SK-N-SH (cell line): ENCODE measurements at regions of chr6 and their contacts with region 1.

Region 1: DNA sequence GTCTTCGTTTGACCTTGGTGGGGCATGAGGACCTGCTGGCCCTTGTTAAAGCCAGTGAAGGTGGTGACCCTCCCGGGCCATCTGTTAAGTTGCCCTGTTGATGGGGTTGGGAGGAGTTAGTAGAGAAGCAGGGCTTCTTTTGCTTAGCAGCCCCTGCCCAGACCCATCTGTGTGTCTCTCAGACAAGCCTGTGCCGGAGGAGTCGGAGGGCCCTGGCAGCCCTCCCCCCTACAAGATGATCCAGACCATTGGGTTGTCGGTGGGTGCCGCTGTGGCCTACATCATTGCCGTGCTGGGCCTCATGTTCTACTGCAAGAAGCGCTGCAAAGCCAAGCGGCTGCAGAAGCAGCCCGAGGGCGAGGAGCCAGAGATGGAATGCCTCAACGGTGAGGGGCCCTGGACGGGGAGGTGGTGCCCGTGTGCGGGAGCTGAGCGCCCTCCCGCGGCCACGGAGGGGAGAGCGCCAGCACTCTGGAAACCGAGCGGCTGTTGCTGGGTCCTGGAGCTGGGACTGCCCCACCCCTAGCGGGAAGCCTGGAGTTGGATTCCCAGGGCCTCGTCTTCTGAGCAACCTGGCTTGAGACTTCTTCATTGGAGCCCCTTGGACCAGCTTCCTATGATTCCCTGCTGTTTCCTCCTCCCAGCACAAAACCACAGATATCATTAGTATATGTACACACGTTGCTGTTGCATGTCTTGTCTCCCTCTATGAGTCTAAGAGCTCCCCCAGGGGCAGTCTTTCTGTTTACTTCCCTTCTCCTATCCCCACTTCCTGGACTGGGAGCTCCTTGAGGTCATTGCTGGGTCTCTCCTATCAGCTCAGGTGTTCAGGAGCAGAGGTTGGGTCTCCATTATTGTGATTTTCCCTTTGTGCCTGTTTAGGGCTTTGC is 27.6 kb upstream of the SRF start:
- DNase-seq: peak; percentile 97
- H3K4me3 ChIP-seq: peak overlapping the region in 1 of 2 experiments; percentile 27; a peak in 1 of 4 replicates
- H3K27ac ChIP-seq: peak overlapping the region; percentile 39 to 77; a peak in 3 of 4 replicates
- H3K4me1 ChIP-seq: peaks cover 8 to 11% of the 10 kb centered on the region in 2 experiments; a peak in 3 of 4 replicates
- H3K27me3 ChIP-seq: no peaks in the 10 kb centered on the region
- CTCF ChIP-seq: peak; percentile 97
- EP300 ChIP-seq: no peak
- RAD21 ChIP-seq: peak; percentile 99

Region 2: GRCh38 chr6:43005844-43006243 is 137.6 kb before region 1 on chr6:
- CTCF ChIA-PET with region 1: interaction called, 26 read pairs
- POLR2A ChIA-PET with region 1: no interaction called
- DNase-seq: no peak
- H3K4me3 ChIP-seq: no peak overlapping the region
- H3K27ac ChIP-seq: no peak overlapping the region
- H3K4me1 ChIP-seq: no peaks in the 10 kb centered on the region
- H3K27me3 ChIP-seq: no peaks in the 10 kb centered on the region
- CTCF ChIP-seq: no peak
- EP300 ChIP-seq: no peak
- RAD21 ChIP-seq: no peak

Region 3: GRCh38 chr6:43059168-43060033 is 84.1 kb before region 1 on chr6 and contains the starts of genes KLC4 and MRPL2:
- CTCF ChIA-PET with region 1: interaction called, 18 read pairs
- POLR2A ChIA-PET with region 1: no interaction called
- DNase-seq: peak; percentile 98
- H3K4me3 ChIP-seq: peak within 1 kb of the TSS; percentile 90 to 92
- H3K27ac ChIP-seq: peak within 1 kb of the TSS; percentile 63 to 86
- H3K4me1 ChIP-seq: peaks cover 0 to 14% of the 10 kb centered on the region in 2 experiments; a peak in 3 of 4 replicates
- H3K27me3 ChIP-seq: no peaks in the 10 kb centered on the region
- CTCF ChIP-seq: no peak
- EP300 ChIP-seq: no peak
- RAD21 ChIP-seq: no peak
- polyA plus RNA-seq, gene KLC4: 17.5 and 22.0 TPM in 2 replicates
- polyA plus RNA-seq, gene MRPL2: 43.0 and 64.7 TPM in 2 replicates

Region 4: DNA sequence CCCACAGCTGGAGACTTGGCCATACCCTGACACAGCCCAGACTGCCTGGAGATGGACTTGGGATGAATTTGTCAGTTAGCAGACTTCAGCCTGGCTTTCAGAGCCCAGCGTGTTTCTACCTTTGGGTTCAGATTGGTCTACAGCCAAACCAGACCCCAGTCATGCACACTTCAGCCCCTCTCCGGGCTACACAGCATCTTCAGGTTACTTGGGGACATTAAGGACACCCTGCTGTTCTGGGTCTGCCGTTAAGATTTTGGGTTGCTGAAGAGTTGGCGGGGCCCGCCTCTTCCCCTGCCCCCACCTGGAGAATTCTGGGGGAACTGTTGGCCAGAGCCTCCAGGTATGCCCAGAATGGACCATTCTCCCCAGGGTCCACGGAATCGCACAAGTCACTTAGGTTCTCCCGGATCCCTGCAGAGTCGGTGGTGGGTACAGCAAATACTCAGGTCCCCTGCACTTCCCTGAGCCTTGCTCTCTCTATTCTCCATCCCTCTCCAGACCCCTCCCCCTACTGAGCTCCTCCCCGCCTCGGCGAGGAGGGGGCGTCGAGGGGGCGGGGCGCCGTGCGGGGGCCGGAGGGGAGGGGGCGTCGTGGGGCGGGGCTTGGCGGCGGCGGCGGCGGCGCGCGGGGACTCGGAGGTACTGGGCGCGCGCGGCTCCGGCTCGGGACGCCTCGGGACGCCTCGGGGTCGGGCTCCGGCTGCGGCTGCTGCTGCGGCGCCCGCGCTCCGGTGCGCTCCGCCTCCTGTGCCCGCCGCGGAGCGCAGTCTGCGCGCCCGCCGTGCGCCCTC is 67.6 kb before region 1 on chr6 and contains the start of gene PTK7:
- CTCF ChIA-PET with region 1: interaction called, 58 read pairs
- POLR2A ChIA-PET with region 1: interaction called, 4 read pairs
- DNase-seq: peak; percentile 98
- H3K4me3 ChIP-seq: peak within 1 kb of the TSS; percentile 81 to 90
- H3K27ac ChIP-seq: peak within 1 kb of the TSS; percentile 71 to 86
- H3K4me1 ChIP-seq: peaks cover 14 to 23% of the 10 kb centered on the region in 2 experiments; a peak in 2 of 4 replicates
- H3K27me3 ChIP-seq: no peaks in the 10 kb centered on the region
- CTCF ChIP-seq: no peak
- EP300 ChIP-seq: no peak
- RAD21 ChIP-seq: no peak
- polyA plus RNA-seq, gene PTK7: 93.7 and 105 TPM in 2 replicates

Region 5: GRCh38 chr6:43159599-43159998 is 16.1 kb after region 1 on chr6:
- CTCF ChIA-PET with region 1: interaction called, 21 read pairs
- POLR2A ChIA-PET with region 1: interaction called, 3 read pairs
- DNase-seq: peak; percentile 42
- H3K4me3 ChIP-seq: no peak overlapping the region
- H3K27ac ChIP-seq: peak overlapping the region in 1 of 2 experiments; percentile 13; a peak in 1 of 4 replicates
- H3K4me1 ChIP-seq: peaks cover 0 to 2% of the 10 kb centered on the region in 2 experiments; a peak in 1 of 4 replicates
- H3K27me3 ChIP-seq: no peaks in the 10 kb centered on the region
- CTCF ChIP-seq: no peak
- EP300 ChIP-seq: no peak
- RAD21 ChIP-seq: no peak